ENCODE measurements at regions of chr19 and their contacts with region 1.

Region 1: GRCh38 chr19:18572301-18572656 is 622 bp downstream of the UBA52 start:
- DNase-seq: no peak
- ATAC-seq: no peak
- H3K4me3 ChIP-seq: peak overlapping the region; percentile 86 to 97
- H3K27ac ChIP-seq: peak overlapping the region; percentile 80
- H3K4me1 ChIP-seq: peaks cover 7% of the 10 kb centered on the region
- H3K27me3 ChIP-seq: no peaks in the 10 kb centered on the region
- CTCF ChIP-seq: no peak

Region 2: GRCh38 chr19:18456974-18457373 is 115.3 kb before region 1 on chr19:
- CTCF ChIA-PET with region 1: no interaction called
- POLR2A ChIA-PET with region 1: interaction called, 11 read pairs
- in situ Hi-C with region 1: no loop called
- intact Hi-C with region 1: no loop called
- DNase-seq: no peak
- ATAC-seq: no peak
- H3K4me3 ChIP-seq: no peak overlapping the region
- H3K27ac ChIP-seq: no peak overlapping the region
- H3K4me1 ChIP-seq: peaks cover 13% of the 10 kb centered on the region
- H3K27me3 ChIP-seq: no peaks in the 10 kb centered on the region
- CTCF ChIP-seq: no peak

Region 3: GRCh38 chr19:18542936-18543815 is 29.1 kb before region 1 on chr19 and contains the start of gene FKBP8:
- CTCF ChIA-PET with region 1: no interaction called
- POLR2A ChIA-PET with region 1: no interaction called
- in situ Hi-C with region 1: no loop called
- intact Hi-C with region 1: no loop called
- DNase-seq: no peak
- ATAC-seq: peak; percentile 99
- H3K4me3 ChIP-seq: peak within 1 kb of the TSS; percentile 52 to 55
- H3K27ac ChIP-seq: peak within 1 kb of the TSS; percentile 77
- H3K4me1 ChIP-seq: peaks cover 11% of the 10 kb centered on the region; the same call in 1 of the 2 replicates
- H3K27me3 ChIP-seq: no peaks in the 10 kb centered on the region
- CTCF ChIP-seq: no peak
- total RNA-seq, gene FKBP8: 182 TPM

Region 4: GRCh38 chr19:18605546-18606280 is 33.4 kb after region 1 on chr19:
- CTCF ChIA-PET with region 1: no interaction called
- POLR2A ChIA-PET with region 1: interaction called, 18 read pairs
- in situ Hi-C with region 1: no loop called
- intact Hi-C with region 1: no loop called
- DNase-seq: no peak
- ATAC-seq: no peak
- H3K4me3 ChIP-seq: peak overlapping the region; percentile 8 to 13; a peak in 2 of 4 replicates
- H3K27ac ChIP-seq: no peak overlapping the region
- H3K4me1 ChIP-seq: peaks cover 2% of the 10 kb centered on the region
- H3K27me3 ChIP-seq: peaks cover 2% of the 10 kb centered on the region
- CTCF ChIP-seq: no peak; the same call in 1 of the 2 replicates

Region 5: GRCh38 chr19:18636183-18636968 is 64.1 kb after region 1 on chr19:
- CTCF ChIA-PET with region 1: no interaction called
- POLR2A ChIA-PET with region 1: no interaction called
- in situ Hi-C with region 1: no loop called
- intact Hi-C with region 1: no loop called
- DNase-seq: peak; percentile 42
- ATAC-seq: peak; percentile 96
- H3K4me3 ChIP-seq: peak overlapping the region; percentile 68 to 69
- H3K27ac ChIP-seq: no peak overlapping the region
- H3K4me1 ChIP-seq: no peaks in the 10 kb centered on the region
- H3K27me3 ChIP-seq: no peaks in the 10 kb centered on the region
- CTCF ChIP-seq: no peak

Region 6: DNA sequence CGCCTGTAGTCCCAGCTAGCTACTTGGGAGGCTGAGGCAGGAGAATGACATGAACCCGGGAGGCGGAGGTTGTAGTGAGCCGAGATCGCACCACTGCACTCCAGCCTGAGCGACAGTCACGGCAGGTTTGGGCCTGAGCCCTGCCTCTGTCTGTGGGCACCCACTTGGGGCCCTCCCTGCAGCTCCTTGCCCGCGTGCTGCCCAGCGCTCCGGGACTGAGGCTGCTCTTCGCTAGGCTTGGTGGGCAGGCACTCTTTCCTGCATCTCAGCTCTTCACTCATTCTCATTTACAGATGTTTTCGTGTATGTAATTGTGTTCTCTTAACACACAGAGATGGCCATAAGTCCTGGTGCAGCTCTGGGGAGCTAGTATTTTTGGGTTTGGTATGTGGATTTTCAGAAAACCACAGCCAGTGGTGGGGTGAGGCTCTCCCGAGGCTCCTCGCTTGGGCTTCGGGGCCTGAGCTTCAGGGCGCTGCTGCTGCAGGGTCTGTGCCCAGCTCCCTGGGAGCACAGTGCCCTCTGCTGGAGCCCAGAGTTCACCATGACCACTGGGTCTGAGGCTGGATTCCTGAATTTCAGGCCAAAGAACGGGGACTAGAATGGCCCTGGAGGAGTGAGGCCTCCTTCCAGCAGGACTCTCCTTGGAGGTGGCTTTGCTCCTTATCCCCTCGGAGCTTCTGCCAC is 274.7 kb after region 1 on chr19:
- CTCF ChIA-PET with region 1: no interaction called
- POLR2A ChIA-PET with region 1: no interaction called
- in situ Hi-C with region 1: no loop called
- intact Hi-C with region 1: no loop called
- DNase-seq: no peak
- ATAC-seq: peak; percentile 95
- H3K4me3 ChIP-seq: no peak overlapping the region
- H3K27ac ChIP-seq: no peak overlapping the region
- H3K4me1 ChIP-seq: no peaks in the 10 kb centered on the region
- H3K27me3 ChIP-seq: no peaks in the 10 kb centered on the region
- CTCF ChIP-seq: peak; percentile 88

Region 7: GRCh38 chr19:19663256-19664038 is 1091.2 kb after region 1 on chr19 and contains the start of gene ATP13A1:
- CTCF ChIA-PET with region 1: no interaction called
- POLR2A ChIA-PET with region 1: no interaction called
- in situ Hi-C with region 1: no loop called
- intact Hi-C with region 1: no loop called
- DNase-seq: peak; percentile 76
- ATAC-seq: peak; percentile 94
- H3K4me3 ChIP-seq: peak within 1 kb of the TSS; percentile 74 to 81
- H3K27ac ChIP-seq: peak within 1 kb of the TSS; percentile 79
- H3K4me1 ChIP-seq: peaks cover 10% of the 10 kb centered on the region
- H3K27me3 ChIP-seq: no peaks in the 10 kb centered on the region
- CTCF ChIP-seq: no peak
- total RNA-seq, gene ATP13A1: 62.3 TPM